Pancreas (tissue), 10 donors: ENCODE measurements at regions of chr9 and their contacts with region 1.

Region 1: GRCh38 chr9:110183208-110184145 is 24.5 kb downstream of the C9orf152 start:
- DNase-seq: peak in 4 of 6 donors; percentile 51 to 80 (median 72)
- ATAC-seq: peak; percentile 84 to 91 (median 90)
- H3K4me3 ChIP-seq: no peak overlapping the region
- H3K27ac ChIP-seq: no peak overlapping the region
- H3K4me1 ChIP-seq: peaks cover 3 to 24% (median 22%) of the 10 kb centered on the region in 3 donors
- H3K27me3 ChIP-seq: no peaks in the 10 kb centered on the region
- CTCF ChIP-seq: peak; percentile 57 to 76 (median 60)

Region 2: DNA sequence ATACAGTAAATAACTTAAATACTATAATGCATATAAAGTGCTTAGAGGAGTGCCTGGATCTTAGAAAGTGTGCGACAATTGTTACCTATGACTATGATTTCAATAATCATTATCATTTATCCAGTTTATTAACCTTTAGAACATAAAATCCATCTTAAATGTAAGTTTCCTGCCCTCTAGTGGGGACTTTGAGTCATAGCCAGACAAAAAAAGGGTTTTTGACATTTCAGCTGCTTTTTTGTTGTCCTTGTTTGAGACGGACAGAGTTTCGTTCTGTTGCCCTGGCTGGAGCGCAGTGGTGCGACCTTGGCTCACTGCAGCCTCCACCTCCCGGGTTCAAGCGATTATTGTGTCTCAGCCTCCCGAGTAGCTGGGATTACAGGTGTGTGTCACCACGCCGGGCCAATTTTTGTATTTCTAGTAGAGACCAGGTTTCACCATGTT is 34.2 kb after region 1 on chr9:
- intact Hi-C with region 1: loop called in 2 of 3 experiments (anchors 5 kb)
- DNase-seq: peak in 1 of 6 donors; percentile 21
- ATAC-seq: peak in 3 of 4 donors; percentile 12 to 35 (median 20)
- H3K4me3 ChIP-seq: no peak overlapping the region
- H3K27ac ChIP-seq: no peak overlapping the region
- H3K4me1 ChIP-seq: peaks cover 24 to 40% (median 25%) of the 10 kb centered on the region in 3 donors
- H3K27me3 ChIP-seq: no peaks in the 10 kb centered on the region
- CTCF ChIP-seq: peak; percentile 51 to 79 (median 60)

Region 3: GRCh38 chr9:110303133-110303532 is 119.7 kb after region 1 on chr9:
- intact Hi-C with region 1: loop called in 1 of 3 experiments (anchors 10 kb)
- DNase-seq: no peak
- ATAC-seq: peak in 1 of 4 donors; percentile 32
- H3K4me3 ChIP-seq: no peak overlapping the region
- H3K27ac ChIP-seq: no peak overlapping the region
- H3K4me1 ChIP-seq: no peaks in the 10 kb centered on the region
- H3K27me3 ChIP-seq: no peaks in the 10 kb centered on the region
- CTCF ChIP-seq: no peak

Region 4: DNA sequence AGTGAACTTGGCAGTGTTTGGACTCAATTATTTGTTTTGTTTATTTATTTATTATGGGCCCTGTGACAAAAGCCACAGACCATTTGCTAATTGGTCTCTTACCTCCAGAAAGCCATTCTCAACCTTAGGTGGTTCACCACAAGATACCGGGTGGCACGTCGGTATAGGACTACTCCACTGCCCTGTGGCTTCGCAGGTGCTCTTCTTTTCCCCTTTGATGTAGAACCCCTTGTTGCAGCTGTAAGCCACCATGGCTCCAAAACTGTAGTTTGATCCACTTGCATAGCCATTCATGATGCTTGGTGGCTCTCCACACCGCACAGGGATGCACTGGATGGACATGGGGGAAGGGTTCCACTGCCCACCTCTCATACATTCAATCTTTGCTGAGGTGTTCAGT is 227.5 kb after region 1 on chr9:
- intact Hi-C with region 1: no loop called
- DNase-seq: no peak
- ATAC-seq: no peak
- H3K4me3 ChIP-seq: no peak overlapping the region
- H3K27ac ChIP-seq: no peak overlapping the region
- H3K4me1 ChIP-seq: no peaks in the 10 kb centered on the region
- H3K27me3 ChIP-seq: no peaks in the 10 kb centered on the region
- CTCF ChIP-seq: no peak